ENCODE measurements at regions of chr5 and their contacts with region 1.

Region 1: DNA sequence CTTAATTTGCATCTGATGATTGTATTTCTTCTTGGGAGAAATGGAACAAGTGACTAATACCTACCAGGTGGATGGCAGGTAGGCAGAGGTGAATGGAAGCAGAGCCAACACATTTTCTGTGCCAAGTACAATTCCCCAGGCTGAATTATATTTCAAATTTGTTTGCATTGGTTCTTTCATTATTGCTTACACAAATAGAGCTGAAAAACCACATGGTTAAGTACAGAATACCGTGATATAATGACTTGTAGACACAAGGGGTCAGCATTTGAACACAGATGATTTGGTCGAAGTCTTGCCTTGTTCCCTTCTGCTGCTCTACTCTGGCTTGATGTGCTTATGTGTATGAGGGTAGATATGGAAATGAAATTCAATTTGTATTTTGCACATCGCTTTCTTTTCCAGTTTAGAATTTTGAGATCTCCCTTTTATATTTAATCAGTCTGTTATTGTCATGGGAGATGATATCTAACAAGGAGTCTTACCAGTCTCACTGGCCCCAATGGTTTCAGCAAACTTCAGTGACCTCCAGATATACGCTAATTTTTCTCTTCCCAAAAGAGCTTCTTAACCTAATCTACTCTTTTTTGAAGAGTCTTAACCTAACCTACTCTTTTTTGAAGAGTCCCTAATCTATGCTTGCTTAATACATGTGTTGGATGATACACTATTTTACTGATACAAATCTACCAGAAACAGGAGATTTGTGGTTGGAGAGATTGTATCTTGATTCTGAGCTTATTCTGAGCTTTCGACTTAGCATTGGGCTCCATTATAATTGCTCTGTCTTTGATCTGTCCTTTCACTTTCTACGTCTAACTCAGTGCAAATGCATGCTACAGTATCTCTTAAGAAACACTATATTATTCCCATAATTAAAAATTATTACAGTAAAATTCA is 88.1 kb downstream of the PCSK1 start:
- DNase-seq: no peak
- ATAC-seq: peak; percentile 87 to 89
- H3K4me3 ChIP-seq: no peak overlapping the region
- H3K27ac ChIP-seq: no peak overlapping the region
- H3K4me1 ChIP-seq: no peaks in the 10 kb centered on the region
- H3K27me3 ChIP-seq: no peaks in the 10 kb centered on the region

Region 2: GRCh38 chr5:95781101-95781583 is 563.8 kb before region 1 on chr5:
- intact Hi-C with region 1: loop called in 1 of 4 experiments (anchors 10 kb)
- DNase-seq: peak; percentile 80 to 92 (median 87)
- ATAC-seq: peak; percentile 93 to 94
- H3K4me3 ChIP-seq: no peak overlapping the region
- H3K27ac ChIP-seq: no peak overlapping the region
- H3K4me1 ChIP-seq: peaks cover 4% of the 10 kb centered on the region
- H3K27me3 ChIP-seq: no peaks in the 10 kb centered on the region

Region 3: GRCh38 chr5:96402500-96402899 is 57.6 kb after region 1 on chr5:
- intact Hi-C with region 1: no loop called
- DNase-seq: no peak
- ATAC-seq: no peak
- H3K4me3 ChIP-seq: no peak overlapping the region
- H3K27ac ChIP-seq: no peak overlapping the region
- H3K4me1 ChIP-seq: no peaks in the 10 kb centered on the region
- H3K27me3 ChIP-seq: no peaks in the 10 kb centered on the region

Region 4: DNA sequence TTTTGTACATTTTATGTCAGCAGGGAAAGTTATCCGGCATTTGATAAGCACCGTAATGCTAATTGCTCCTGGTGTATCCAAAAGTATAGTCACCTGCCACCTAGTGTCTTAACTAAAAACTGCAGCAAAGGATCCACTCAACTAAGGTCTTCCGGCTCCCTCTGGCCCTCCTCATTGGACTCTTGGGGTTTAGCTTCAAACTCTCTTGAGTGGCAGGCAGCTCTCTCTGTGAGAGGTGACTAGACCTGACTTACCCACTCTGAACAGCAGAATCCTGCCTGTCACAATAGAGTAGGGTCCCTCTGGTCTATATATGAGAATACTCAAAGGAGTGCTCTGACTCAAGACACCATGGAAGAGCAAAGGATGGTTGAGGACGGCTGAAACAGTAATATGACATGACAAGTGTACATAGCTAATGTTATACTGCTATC is 256.9 kb after region 1 on chr5:
- intact Hi-C with region 1: loop called (anchors 2 to 5 kb)
- DNase-seq: no peak
- ATAC-seq: peak; percentile 80 to 84
- H3K4me3 ChIP-seq: no peak overlapping the region
- H3K27ac ChIP-seq: no peak overlapping the region
- H3K4me1 ChIP-seq: no peaks in the 10 kb centered on the region
- H3K27me3 ChIP-seq: no peaks in the 10 kb centered on the region